ENCODE measurements at regions of chr12 and their contacts with region 1.

Region 1: DNA sequence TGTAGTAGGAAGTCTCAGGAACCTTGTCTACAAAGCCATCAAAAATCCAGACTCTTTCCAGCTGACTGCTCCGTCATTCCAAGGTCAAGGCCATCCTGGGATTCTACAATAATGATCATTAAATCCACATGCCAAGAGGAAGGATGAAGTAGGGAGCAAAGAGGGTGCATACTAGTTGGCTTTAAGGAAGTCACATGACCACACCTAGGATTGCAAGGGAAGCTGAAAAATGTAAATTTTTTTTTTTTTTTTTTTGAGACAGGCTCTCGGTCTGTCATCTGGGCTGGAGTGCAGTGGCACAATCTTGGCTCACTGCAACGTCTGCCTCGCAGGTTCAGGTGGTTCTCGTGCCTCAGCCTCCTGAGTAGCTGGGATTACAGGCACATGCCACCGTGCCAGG is 7.3 kb upstream of the MRPL42 start:
- DNase-seq: no peak
- ATAC-seq: no peak
- H3K4me3 ChIP-seq: no peak overlapping the region
- H3K27ac ChIP-seq: no peak overlapping the region
- H3K4me1 ChIP-seq: no peaks in the 10 kb centered on the region
- H3K27me3 ChIP-seq: no peaks in the 10 kb centered on the region
- CTCF ChIP-seq: no peak
- POLR2A ChIP-seq: no peak
- RAD21 ChIP-seq: no peak

Region 2: GRCh38 chr12:93361151-93361919 is 98.7 kb before region 1 on chr12:
- CTCF ChIA-PET with region 1: no interaction called
- POLR2A ChIA-PET with region 1: no interaction called
- dilution Hi-C with region 1: no loop called
- in situ Hi-C with region 1: no loop called
- intact Hi-C with region 1: no loop called
- DNase-seq: peak; percentile 39
- ATAC-seq: no peak
- H3K4me3 ChIP-seq: no peak overlapping the region
- H3K27ac ChIP-seq: no peak overlapping the region
- H3K4me1 ChIP-seq: no peaks in the 10 kb centered on the region; the same call in 1 of the 2 replicates
- H3K27me3 ChIP-seq: no peaks in the 10 kb centered on the region
- CTCF ChIP-seq: no peak
- POLR2A ChIP-seq: no peak
- RAD21 ChIP-seq: no peak

Region 3: GRCh38 chr12:93407054-93407962 is 52.7 kb before region 1 on chr12:
- CTCF ChIA-PET with region 1: no interaction called
- POLR2A ChIA-PET with region 1: no interaction called
- dilution Hi-C with region 1: no loop called
- in situ Hi-C with region 1: no loop called
- intact Hi-C with region 1: no loop called
- DNase-seq: no peak
- ATAC-seq: no peak
- H3K4me3 ChIP-seq: no peak overlapping the region
- H3K27ac ChIP-seq: no peak overlapping the region
- H3K4me1 ChIP-seq: peaks cover 2% of the 10 kb centered on the region
- H3K27me3 ChIP-seq: no peaks in the 10 kb centered on the region
- CTCF ChIP-seq: no peak
- POLR2A ChIP-seq: no peak
- RAD21 ChIP-seq: no peak

Region 4: GRCh38 chr12:93591137-93591868 is 131.3 kb after region 1 on chr12:
- CTCF ChIA-PET with region 1: no interaction called
- POLR2A ChIA-PET with region 1: no interaction called
- dilution Hi-C with region 1: no loop called
- in situ Hi-C with region 1: no loop called
- intact Hi-C with region 1: no loop called
- DNase-seq: peak; percentile 87
- ATAC-seq: peak; percentile 94
- H3K4me3 ChIP-seq: peak overlapping the region; percentile 52
- H3K27ac ChIP-seq: peak overlapping the region; percentile 78
- H3K4me1 ChIP-seq: no peaks in the 10 kb centered on the region; the same call in 1 of the 2 replicates
- H3K27me3 ChIP-seq: no peaks in the 10 kb centered on the region
- CTCF ChIP-seq: no peak
- POLR2A ChIP-seq: peak; percentile 85
- RAD21 ChIP-seq: 0 out of 2 replicates have a peak, but pooled peaks have one; percentile 1

Region 5: DNA sequence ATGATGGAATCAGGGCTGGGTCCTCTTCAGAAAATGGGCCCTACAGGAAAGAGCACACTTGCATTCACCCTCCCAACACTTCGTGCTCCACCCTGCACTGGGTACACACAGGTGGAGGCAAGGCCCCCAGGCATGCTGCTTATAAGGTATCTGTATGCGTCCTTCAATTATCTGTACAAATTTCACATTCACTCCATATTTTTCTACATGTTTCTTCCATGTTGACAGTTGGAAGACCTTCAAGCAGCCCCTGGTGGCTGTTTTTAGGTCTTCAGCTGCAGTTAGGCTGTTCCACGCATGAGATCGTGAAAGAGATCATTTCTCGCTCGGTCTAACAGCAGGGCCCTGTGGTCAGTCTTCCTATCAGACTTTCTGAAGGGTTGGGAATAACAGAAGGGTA is 735.4 kb after region 1 on chr12:
- CTCF ChIA-PET with region 1: interaction called, 10 read pairs
- POLR2A ChIA-PET with region 1: no interaction called
- dilution Hi-C with region 1: no loop called
- in situ Hi-C with region 1: no loop called
- intact Hi-C with region 1: no loop called
- DNase-seq: no peak
- ATAC-seq: no peak
- H3K4me3 ChIP-seq: no peak overlapping the region
- H3K27ac ChIP-seq: no peak overlapping the region
- H3K4me1 ChIP-seq: no peaks in the 10 kb centered on the region
- H3K27me3 ChIP-seq: peaks cover 6% of the 10 kb centered on the region
- CTCF ChIP-seq: no peak
- POLR2A ChIP-seq: no peak
- RAD21 ChIP-seq: no peak

Measured in IMR-90 (cell line).